Endothelial cell of umbilical vein (primary cell): ENCODE measurements at regions of chr1 and their contacts with region 1.

Region 1: DNA sequence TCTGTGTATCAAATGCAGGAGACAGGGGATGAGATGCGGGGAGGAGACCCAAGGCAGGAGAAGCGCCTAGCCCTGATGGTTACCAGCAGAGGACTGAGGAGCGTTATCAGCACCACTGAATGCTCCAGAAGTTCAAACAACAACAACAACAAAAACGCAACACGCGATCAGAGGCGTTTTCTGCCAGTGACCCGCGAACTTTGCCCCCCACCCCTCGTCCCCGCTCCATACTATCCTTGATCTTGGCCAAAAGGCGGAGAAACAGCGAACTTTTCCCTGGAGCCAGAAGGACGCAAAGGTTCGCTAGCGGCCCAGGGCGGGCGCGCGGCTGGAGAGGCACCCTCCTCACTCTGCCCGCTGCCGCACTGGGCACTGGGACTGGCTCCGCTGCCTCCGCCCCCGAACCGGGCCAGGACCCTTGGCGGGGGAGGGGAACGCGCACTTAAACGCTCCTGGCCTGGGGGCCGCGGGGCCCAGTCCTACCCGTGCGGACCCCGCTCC is 699 bp downstream of the ECHDC2 start:
- DNase-seq: peak; percentile 3
- H3K4me3 ChIP-seq: peak overlapping the region; percentile 20 to 56 (median 48)
- H3K27ac ChIP-seq: no peak overlapping the region
- H3K4me1 ChIP-seq: no peaks in the 10 kb centered on the region
- H3K27me3 ChIP-seq: no peaks in the 10 kb centered on the region
- CTCF ChIP-seq: no peak
- POLR2A ChIP-seq: no peak

Region 2: GRCh38 chr1:52904927-52905698 is 15.7 kb before region 1 on chr1:
- CTCF ChIA-PET with region 1: interaction called, 10 read pairs
- POLR2A ChIA-PET with region 1: no interaction called
- dilution Hi-C with region 1: no loop called
- intact Hi-C with region 1: no loop called
- DNase-seq: no peak
- H3K4me3 ChIP-seq: no peak overlapping the region
- H3K27ac ChIP-seq: no peak overlapping the region
- H3K4me1 ChIP-seq: no peaks in the 10 kb centered on the region
- H3K27me3 ChIP-seq: no peaks in the 10 kb centered on the region
- CTCF ChIP-seq: peak; percentile 29 to 59
- POLR2A ChIP-seq: no peak

Region 3: DNA sequence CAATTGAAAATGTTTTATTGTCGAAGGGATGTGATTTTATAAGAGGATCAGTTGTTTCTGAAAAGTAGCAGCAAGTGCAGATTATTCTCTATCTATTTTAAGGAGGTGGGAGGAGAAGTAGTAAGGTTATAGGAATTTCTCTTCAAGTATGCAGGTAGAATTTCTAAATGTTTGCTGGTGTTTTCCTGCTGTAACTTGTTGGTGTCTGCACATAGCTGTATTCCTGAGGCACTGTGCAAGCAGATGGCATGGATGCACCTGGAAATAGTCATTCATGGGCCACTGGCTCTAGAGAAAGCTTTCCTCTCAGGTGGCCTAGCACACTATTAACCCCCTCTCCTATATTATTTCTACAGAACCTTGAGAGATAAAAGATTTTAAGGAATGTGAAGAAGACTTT is 110.9 kb after region 1 on chr1:
- CTCF ChIA-PET with region 1: no interaction called
- POLR2A ChIA-PET with region 1: no interaction called
- dilution Hi-C with region 1: no loop called
- intact Hi-C with region 1: no loop called
- DNase-seq: no peak
- H3K4me3 ChIP-seq: no peak overlapping the region
- H3K27ac ChIP-seq: no peak overlapping the region
- H3K4me1 ChIP-seq: no peaks in the 10 kb centered on the region
- H3K27me3 ChIP-seq: no peaks in the 10 kb centered on the region
- CTCF ChIP-seq: no peak
- POLR2A ChIP-seq: no peak